ENCODE measurements at regions of chr5 and their contacts with region 1.

Region 1: GRCh38 chr5:157820593-157821252 is 38.2 kb downstream of the CLINT1 start:
- DNase-seq: peak; percentile 80
- H3K4me3 ChIP-seq: no peak overlapping the region
- H3K27ac ChIP-seq: no peak overlapping the region
- H3K4me1 ChIP-seq: peaks cover 14% of the 10 kb centered on the region
- H3K27me3 ChIP-seq: no peaks in the 10 kb centered on the region
- CTCF ChIP-seq: peak; percentile 36 to 39
- POLR2A ChIP-seq: no peak

Region 2: DNA sequence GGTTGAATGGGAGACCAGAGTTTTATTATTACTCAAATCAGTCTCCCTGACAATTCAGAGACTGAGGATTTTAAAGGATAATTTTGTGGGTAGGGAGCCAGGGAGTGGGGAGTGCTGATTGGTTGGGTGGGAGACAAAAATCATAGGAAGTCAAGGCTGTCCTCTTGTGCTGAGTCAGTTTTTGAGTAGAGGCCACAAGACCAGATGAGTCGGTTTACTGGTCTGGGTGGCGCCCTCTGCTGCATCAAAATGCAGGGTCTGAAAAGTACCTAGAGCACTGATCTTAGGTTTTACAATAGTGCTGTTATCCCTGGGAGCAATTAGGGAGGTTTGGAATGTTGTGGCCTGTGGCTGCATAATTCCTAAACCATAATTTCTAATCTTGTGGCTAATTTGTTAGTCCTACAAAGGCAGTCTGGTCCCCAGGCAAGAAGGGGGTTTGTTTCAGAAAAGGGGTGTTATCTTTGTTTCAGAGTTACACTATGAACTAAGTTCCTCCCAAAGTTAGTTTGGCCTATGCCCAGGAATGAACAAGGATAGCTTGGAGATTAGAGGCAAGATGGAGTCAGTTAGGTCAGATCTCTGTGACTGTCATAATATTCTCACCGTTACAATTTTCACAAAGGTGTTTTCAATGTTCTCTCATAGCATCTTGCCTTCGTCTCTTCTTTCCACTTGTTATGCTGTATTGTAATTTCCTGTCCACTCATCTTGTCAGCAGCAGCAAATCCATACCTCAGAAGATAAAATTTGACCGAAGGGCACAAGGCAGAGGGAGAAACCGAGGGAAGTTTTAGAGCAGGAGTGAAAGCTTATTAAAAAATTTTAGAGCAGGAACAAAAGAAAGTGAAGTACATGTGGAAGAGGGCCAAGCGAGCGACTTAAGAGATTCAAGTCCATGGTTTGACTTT is 97.4 kb after region 1 on chr5:
- CTCF ChIA-PET with region 1: interaction called, 32 read pairs
- POLR2A ChIA-PET with region 1: no interaction called
- dilution Hi-C with region 1: no loop called
- intact Hi-C with region 1: loop called (anchors 1 kb)
- DNase-seq: peak; percentile 74
- H3K4me3 ChIP-seq: no peak overlapping the region
- H3K27ac ChIP-seq: no peak overlapping the region
- H3K4me1 ChIP-seq: peaks cover 8% of the 10 kb centered on the region
- H3K27me3 ChIP-seq: no peaks in the 10 kb centered on the region
- CTCF ChIP-seq: peak; percentile 57 to 64
- POLR2A ChIP-seq: no peak

Region 3: GRCh38 chr5:157994906-157995519 is 174.3 kb after region 1 on chr5:
- CTCF ChIA-PET with region 1: interaction called, 28 read pairs
- POLR2A ChIA-PET with region 1: no interaction called
- dilution Hi-C with region 1: no loop called
- intact Hi-C with region 1: loop called (anchors 1 kb)
- DNase-seq: peak; percentile 63
- H3K4me3 ChIP-seq: no peak overlapping the region
- H3K27ac ChIP-seq: no peak overlapping the region
- H3K4me1 ChIP-seq: no peaks in the 10 kb centered on the region
- H3K27me3 ChIP-seq: no peaks in the 10 kb centered on the region
- CTCF ChIP-seq: peak; percentile 63 to 79
- POLR2A ChIP-seq: no peak